Tibial artery (tissue), 4 donors: ENCODE measurements at regions of chr19 and their contacts with region 1.

Region 1: DNA sequence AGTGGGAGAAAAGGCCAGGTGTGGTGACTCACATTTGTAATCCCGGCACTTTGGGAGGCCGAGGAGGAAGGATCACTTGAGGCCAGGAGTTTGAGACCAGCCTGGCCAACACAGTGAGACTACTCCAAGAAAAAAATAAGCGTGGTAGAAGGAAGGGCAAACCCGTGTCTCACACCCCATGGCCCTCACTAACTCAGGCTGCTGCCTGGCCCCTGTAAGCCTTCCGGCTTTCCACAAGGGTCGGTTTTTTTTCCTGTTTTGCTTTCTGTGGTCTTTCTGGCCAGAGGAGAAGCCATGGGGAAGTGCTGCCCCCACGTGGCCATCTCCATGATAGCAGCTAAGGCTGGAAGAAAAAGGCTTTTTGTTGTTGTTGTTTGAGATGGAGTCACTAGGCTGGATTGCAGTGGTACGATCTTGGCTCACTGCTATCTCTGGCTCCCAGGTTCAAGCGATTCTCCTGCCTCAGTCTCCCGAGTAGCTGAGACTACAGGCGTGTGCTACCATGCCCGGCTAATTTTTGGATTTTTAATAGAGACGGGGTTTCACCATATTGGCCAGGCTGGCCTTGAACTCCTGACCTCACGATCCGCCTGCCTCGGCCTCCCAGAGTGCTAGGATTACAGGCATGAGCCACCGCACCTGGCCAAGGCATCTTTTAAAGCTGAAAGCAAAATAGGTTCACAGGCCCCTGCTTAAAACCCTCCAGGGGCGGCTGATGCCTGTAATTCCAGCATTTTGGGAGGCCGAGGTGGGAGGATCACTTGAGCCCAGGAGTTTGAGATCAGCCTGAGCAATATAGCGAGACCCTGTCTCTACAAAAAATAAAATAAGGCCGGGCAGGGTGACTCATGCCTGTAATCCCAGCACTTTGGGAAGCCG is 7.5 kb upstream of the ARHGEF18 start:
- DNase-seq: peak; percentile 74 to 83
- H3K4me3 ChIP-seq: no peak overlapping the region
- H3K27ac ChIP-seq: no peak overlapping the region
- H3K4me1 ChIP-seq: peaks cover 0 to 3% (median 0%) of the 10 kb centered on the region in 4 donors
- H3K27me3 ChIP-seq: peaks cover 0 to 2% of the 10 kb centered on the region in 2 donors
- CTCF ChIP-seq: peak; percentile 94 to 95

Region 2: GRCh38 chr19:7104747-7105447 is 236.3 kb before region 1 on chr19:
- intact Hi-C with region 1: loop called (anchors 2 kb)
- DNase-seq: peak in 1 of 2 donors; percentile 54
- H3K4me3 ChIP-seq: no peak overlapping the region
- H3K27ac ChIP-seq: no peak overlapping the region
- H3K4me1 ChIP-seq: peaks cover 0 to 2% (median 0%) of the 10 kb centered on the region in 4 donors
- H3K27me3 ChIP-seq: no peaks in the 10 kb centered on the region
- CTCF ChIP-seq: no peak

Region 3: GRCh38 chr19:7149956-7150705 is 191.1 kb before region 1 on chr19:
- intact Hi-C with region 1: loop called (anchors 2 kb)
- DNase-seq: peak in 1 of 2 donors; percentile 53
- H3K4me3 ChIP-seq: no peak overlapping the region
- H3K27ac ChIP-seq: no peak overlapping the region
- H3K4me1 ChIP-seq: no peaks in the 10 kb centered on the region
- H3K27me3 ChIP-seq: no peaks in the 10 kb centered on the region
- CTCF ChIP-seq: no peak